ENCODE measurements at regions of chr3 and their contacts with region 1.

Region 1: DNA sequence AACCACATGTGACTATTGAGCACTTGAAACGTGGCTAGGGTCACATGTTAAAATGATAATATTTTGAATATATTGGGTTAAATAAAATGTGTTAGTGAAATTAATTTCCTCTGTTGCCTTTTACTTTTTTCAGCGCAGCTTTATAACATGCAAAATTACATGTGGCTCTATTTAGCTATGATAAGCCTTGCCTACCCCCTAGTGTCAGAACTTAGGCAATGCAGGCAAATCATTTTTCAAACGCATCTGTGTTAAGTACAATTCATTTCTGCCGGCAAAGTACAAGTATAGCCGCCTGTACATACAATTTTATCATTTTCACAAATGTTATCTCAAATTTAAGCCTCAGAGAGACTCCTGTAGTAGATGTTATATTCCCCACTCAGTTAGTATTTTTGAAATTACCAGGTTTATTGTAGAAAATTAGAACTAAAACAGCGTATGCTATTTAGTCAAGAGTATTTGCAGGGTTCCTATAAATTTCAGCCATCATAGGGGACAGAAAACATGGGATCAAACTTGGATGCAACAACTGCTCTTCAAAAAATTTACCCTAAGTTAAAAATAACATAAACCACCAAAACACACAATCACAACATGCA is 56.1 kb downstream of the TAFA4 start:
- DNase-seq: peak in 7 of 14 experiments; percentile 2 to 72 (median 31)
- ATAC-seq: peak; percentile 44
- H3K4me3 ChIP-seq: no peak overlapping the region
- H3K4me3 Mint-ChIP-seq: no peak overlapping the region
- H3K27ac ChIP-seq: no peak overlapping the region
- H3K27ac Mint-ChIP-seq: no peak overlapping the region
- H3K4me1 ChIP-seq: no peaks in the 10 kb centered on the region
- H3K4me1 Mint-ChIP-seq: no peaks in the 10 kb centered on the region
- H3K27me3 ChIP-seq: no peaks in the 10 kb centered on the region
- H3K27me3 Mint-ChIP-seq: peaks cover 39% of the 10 kb centered on the region
- CTCF ChIP-seq: peak; percentile 92

Region 2: DNA sequence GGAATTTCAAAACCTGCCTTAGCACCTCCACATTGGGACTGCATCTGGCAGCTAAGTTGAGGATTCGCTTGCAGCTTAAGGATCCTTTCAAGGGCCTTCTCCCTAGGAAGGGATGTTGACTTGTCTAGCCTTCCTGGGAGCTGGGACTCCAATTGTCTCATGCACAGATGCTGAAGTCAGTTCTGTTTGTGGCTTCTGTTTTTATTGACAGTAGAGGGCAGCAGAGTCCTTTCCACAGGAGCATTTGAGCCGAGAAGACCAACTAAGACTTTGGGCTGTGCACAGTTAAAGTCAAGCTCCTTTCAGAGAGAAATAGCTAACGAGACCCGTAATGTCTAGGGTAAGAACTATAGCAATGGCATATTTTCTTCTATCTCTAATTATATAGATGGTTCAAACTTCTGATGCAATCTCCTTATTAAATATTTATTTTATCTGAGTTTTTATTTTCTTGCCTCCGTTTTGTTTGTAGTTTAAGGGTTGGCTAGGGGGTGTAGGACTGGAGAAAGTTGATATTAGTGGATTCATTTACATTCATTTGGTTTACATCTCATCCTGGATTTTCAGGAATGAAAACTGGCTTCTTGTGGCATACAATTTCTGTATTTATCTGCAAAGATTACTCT is 1937.8 kb before region 1 on chr3:
- CTCF ChIA-PET with region 1: interaction called, 3 read pairs
- POLR2A ChIA-PET with region 1: no interaction called
- intact Hi-C with region 1: loop called (anchors 5 kb)
- DNase-seq: peak in 10 of 14 experiments; percentile 0 to 65 (median 4)
- ATAC-seq: no peak
- H3K4me3 ChIP-seq: no peak overlapping the region
- H3K4me3 Mint-ChIP-seq: no peak overlapping the region
- H3K27ac ChIP-seq: no peak overlapping the region
- H3K27ac Mint-ChIP-seq: no peak overlapping the region
- H3K4me1 ChIP-seq: no peaks in the 10 kb centered on the region
- H3K4me1 Mint-ChIP-seq: no peaks in the 10 kb centered on the region
- H3K27me3 ChIP-seq: no peaks in the 10 kb centered on the region
- H3K27me3 Mint-ChIP-seq: peaks cover 49% of the 10 kb centered on the region
- CTCF ChIP-seq: peak; percentile 72

Region 3: GRCh38 chr3:67384760-67385397 is 1491.3 kb before region 1 on chr3:
- CTCF ChIA-PET with region 1: interaction called, 4 read pairs
- POLR2A ChIA-PET with region 1: no interaction called
- intact Hi-C with region 1: loop called (anchors 1 to 2 kb)
- DNase-seq: peak in 12 of 14 experiments; percentile 11 to 57 (median 34)
- ATAC-seq: no peak
- H3K4me3 ChIP-seq: no peak overlapping the region
- H3K4me3 Mint-ChIP-seq: no peak overlapping the region
- H3K27ac ChIP-seq: no peak overlapping the region
- H3K27ac Mint-ChIP-seq: peak overlapping the region; percentile 6
- H3K4me1 ChIP-seq: no peaks in the 10 kb centered on the region
- H3K4me1 Mint-ChIP-seq: no peaks in the 10 kb centered on the region
- H3K27me3 ChIP-seq: no peaks in the 10 kb centered on the region
- H3K27me3 Mint-ChIP-seq: no peaks in the 10 kb centered on the region
- CTCF ChIP-seq: peak; percentile 37

Region 4: DNA sequence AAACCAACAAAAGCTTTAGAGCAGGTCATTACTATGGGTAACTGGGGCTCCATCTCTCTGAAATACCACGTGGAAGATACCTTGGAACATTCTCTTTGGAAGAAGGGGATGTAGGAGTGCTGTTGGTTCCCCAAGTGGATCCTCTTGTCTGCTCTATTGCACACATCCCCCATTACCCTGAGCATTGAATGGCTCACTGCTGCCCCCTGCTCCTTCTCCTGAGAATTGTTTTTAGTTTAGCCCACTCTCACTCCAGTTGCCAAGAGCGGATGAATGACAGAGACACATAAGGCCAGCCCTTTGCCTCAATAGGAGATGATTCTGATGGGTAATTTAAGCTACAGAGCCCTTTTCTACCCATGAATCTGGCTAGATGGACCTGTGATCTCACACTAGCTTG is 1086.2 kb before region 1 on chr3:
- CTCF ChIA-PET with region 1: no interaction called
- POLR2A ChIA-PET with region 1: no interaction called
- intact Hi-C with region 1: loop called in 1 of 2 experiments (anchors 1 kb)
- DNase-seq: peak; percentile 31 to 79 (median 60)
- ATAC-seq: peak; percentile 73
- H3K4me3 ChIP-seq: no peak overlapping the region
- H3K4me3 Mint-ChIP-seq: no peak overlapping the region
- H3K27ac ChIP-seq: no peak overlapping the region
- H3K27ac Mint-ChIP-seq: no peak overlapping the region
- H3K4me1 ChIP-seq: peaks cover 5% of the 10 kb centered on the region
- H3K4me1 Mint-ChIP-seq: peaks cover 16% of the 10 kb centered on the region
- H3K27me3 ChIP-seq: no peaks in the 10 kb centered on the region
- H3K27me3 Mint-ChIP-seq: no peaks in the 10 kb centered on the region
- CTCF ChIP-seq: peak; percentile 84

Region 5: DNA sequence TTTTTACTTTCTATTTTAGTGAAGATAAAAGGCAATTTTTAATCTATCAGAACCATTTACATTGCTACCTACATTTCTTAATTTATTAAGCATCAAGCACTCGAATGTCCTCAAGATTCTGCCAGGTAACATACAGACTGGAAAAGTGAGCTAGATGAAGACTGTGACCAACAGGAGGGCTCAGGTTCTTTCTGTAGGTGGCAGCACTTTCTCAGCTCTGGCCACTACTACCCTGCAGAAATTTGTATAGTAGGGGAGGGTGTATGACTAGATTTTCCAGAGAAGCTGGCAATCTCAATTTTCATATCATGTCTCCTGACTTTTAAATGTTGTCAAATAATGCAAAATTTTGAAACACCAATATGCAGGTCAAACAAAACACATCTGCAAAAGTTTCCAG is 1056.8 kb before region 1 on chr3:
- CTCF ChIA-PET with region 1: interaction called, 3 read pairs
- POLR2A ChIA-PET with region 1: no interaction called
- intact Hi-C with region 1: loop called (anchors 2 to 5 kb)
- DNase-seq: peak in 5 of 14 experiments; percentile 3 to 38 (median 27)
- ATAC-seq: no peak
- H3K4me3 ChIP-seq: no peak overlapping the region
- H3K4me3 Mint-ChIP-seq: no peak overlapping the region
- H3K27ac ChIP-seq: no peak overlapping the region
- H3K27ac Mint-ChIP-seq: no peak overlapping the region
- H3K4me1 ChIP-seq: no peaks in the 10 kb centered on the region
- H3K4me1 Mint-ChIP-seq: no peaks in the 10 kb centered on the region
- H3K27me3 ChIP-seq: no peaks in the 10 kb centered on the region
- H3K27me3 Mint-ChIP-seq: no peaks in the 10 kb centered on the region
- CTCF ChIP-seq: peak; percentile 30

Region 6: GRCh38 chr3:67901681-67902080 is 974.5 kb before region 1 on chr3:
- CTCF ChIA-PET with region 1: no interaction called
- POLR2A ChIA-PET with region 1: no interaction called
- intact Hi-C with region 1: loop called in 1 of 2 experiments (anchors 2 kb)
- DNase-seq: peak in 4 of 14 experiments; percentile 8 to 34 (median 32)
- ATAC-seq: no peak
- H3K4me3 ChIP-seq: no peak overlapping the region
- H3K4me3 Mint-ChIP-seq: no peak overlapping the region
- H3K27ac ChIP-seq: no peak overlapping the region
- H3K27ac Mint-ChIP-seq: no peak overlapping the region
- H3K4me1 ChIP-seq: no peaks in the 10 kb centered on the region
- H3K4me1 Mint-ChIP-seq: peaks cover 13% of the 10 kb centered on the region
- H3K27me3 ChIP-seq: no peaks in the 10 kb centered on the region
- H3K27me3 Mint-ChIP-seq: no peaks in the 10 kb centered on the region
- CTCF ChIP-seq: peak; percentile 64

Region 7: DNA sequence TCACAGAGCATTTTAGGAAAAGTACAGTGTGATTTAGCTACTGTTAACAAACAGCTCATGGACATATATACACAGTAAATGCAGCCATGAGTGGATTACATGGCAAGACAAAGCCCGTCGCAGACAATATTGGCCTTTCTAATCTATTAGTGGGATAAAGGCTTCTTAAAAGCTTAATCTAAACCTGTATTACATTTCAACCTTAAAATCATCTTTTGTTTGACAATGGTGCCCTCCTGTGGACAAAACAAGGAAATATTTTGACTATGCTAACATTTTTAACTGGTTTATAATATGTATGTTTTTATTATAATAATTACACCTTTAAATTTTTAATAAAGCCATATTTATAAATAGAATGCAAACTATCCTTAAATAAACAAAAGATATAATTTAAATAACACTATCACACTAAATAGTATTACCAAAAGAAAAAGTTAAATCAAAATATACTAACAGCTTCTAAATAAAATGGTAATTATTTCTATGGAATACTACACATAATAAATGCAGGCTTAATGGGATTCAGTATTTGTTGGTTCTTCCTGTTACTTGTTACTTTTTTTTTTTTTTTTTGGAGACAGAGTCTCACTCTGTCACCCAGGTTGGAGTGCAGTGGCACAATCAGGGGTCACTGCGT is 17.5 kb after region 1 on chr3:
- CTCF ChIA-PET with region 1: no interaction called
- POLR2A ChIA-PET with region 1: no interaction called
- intact Hi-C with region 1: no loop called
- DNase-seq: peak in 4 of 14 experiments; percentile 4 to 60 (median 52)
- ATAC-seq: no peak
- H3K4me3 ChIP-seq: no peak overlapping the region
- H3K4me3 Mint-ChIP-seq: no peak overlapping the region
- H3K27ac ChIP-seq: no peak overlapping the region
- H3K27ac Mint-ChIP-seq: no peak overlapping the region
- H3K4me1 ChIP-seq: no peaks in the 10 kb centered on the region
- H3K4me1 Mint-ChIP-seq: no peaks in the 10 kb centered on the region
- H3K27me3 ChIP-seq: peaks cover 0 to 4% of the 10 kb centered on the region in 2 experiments
- H3K27me3 Mint-ChIP-seq: peaks cover 14% of the 10 kb centered on the region
- CTCF ChIP-seq: peak; percentile 77

Region 8: GRCh38 chr3:69092030-69092516 is 215.9 kb after region 1 on chr3:
- CTCF ChIA-PET with region 1: no interaction called
- POLR2A ChIA-PET with region 1: no interaction called
- intact Hi-C with region 1: no loop called
- DNase-seq: peak in 5 of 14 experiments; percentile 9 to 69 (median 66)
- ATAC-seq: peak; percentile 71
- H3K4me3 ChIP-seq: peak overlapping the region; percentile 40
- H3K4me3 Mint-ChIP-seq: peak overlapping the region; percentile 80
- H3K27ac ChIP-seq: peak overlapping the region; percentile 77 to 78
- H3K27ac Mint-ChIP-seq: peak overlapping the region; percentile 92
- H3K4me1 ChIP-seq: peaks cover 90% of the 10 kb centered on the region
- H3K4me1 Mint-ChIP-seq: peaks cover 89% of the 10 kb centered on the region
- H3K27me3 ChIP-seq: no peaks in the 10 kb centered on the region
- H3K27me3 Mint-ChIP-seq: no peaks in the 10 kb centered on the region
- CTCF ChIP-seq: no peak

Measured in CD4-positive, alpha-beta T cell (primary cell).